Adrenal gland (tissue), 19 donors: ENCODE measurements at regions of chr4 and their contacts with region 1.

Region 1: DNA sequence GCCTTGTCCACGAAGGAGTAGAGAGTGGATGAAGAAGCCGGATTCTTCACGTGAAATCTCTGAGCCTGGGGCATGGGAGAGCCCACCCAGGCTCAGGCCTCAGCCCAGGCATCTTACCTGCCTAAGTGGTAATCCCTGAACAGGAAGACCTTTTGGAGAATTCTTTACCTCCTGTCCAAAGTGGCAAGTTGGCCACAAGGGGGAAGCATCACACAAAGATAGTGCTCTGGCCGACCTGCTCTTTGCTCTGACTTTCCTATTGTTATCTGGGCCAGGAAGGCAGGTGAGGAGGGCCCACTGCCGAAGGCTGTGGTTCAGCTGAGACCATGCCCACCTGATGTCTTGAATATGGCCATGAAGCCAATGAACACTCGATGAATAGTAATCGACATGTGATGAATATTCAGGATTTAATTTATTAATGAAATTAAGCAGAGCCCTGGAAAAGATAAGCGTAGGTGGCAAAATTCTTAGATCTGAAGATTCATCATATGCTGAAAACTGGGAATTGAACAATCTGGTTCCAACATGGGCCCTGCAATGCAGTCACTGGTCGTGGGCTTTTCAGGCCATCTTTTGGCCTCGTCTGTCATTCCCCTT is 93.8 kb downstream of the PDGFRA start:
- DNase-seq: peak; percentile 67 to 86 (median 70)
- H3K4me3 ChIP-seq: no peak overlapping the region
- H3K27ac ChIP-seq: no peak overlapping the region
- H3K4me1 ChIP-seq: no peaks in the 10 kb centered on the region
- H3K27me3 ChIP-seq: no peaks in the 10 kb centered on the region
- CTCF ChIP-seq: peak; percentile 56 to 73 (median 70)
- POLR2A ChIP-seq: no peak

Region 2: DNA sequence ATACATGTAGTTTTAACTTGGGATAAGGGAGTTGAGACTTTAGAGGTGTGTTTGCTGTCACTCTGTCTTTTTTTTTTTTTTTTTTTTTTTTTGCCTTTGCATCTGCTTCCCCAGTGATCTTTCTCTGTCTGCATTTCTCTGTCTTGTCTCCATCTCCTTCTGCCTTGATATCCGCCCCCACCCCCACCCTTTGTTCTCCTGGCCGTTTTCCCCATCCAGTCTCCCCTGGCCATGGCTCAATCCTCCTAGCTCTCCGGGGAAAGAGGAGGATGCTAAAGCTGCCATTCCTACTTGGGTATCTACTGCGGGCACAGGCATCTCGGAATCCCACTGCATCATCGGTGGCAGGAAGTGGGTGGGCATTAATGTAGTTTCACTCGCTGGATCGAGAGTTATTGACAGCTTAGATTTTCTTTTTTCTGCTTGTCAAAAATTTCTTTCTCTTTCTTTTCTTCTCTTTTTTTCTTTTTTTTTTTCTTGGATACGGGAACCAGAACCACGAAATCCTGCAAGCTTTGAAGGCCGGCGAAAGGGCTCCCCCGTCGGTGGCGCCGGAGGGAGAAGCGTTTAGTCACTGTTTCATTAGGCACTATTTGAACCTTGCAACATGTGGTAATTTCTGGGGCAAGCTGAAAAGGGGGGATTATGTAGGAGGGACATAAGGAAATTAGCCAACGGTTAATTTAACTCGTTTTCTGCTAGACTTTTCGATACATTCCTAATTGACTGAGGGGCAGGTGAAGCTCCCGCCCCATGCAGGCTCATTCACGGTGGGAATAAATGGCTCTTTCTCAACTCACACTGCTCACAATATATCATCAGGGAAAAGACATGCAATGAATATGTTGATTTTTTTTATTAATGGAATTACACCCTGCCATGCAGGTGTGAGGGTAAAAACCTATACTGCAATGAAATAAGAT is 214.7 kb before region 1 on chr4:
- intact Hi-C with region 1: no loop called
- DNase-seq: no peak
- H3K4me3 ChIP-seq: no peak overlapping the region
- H3K27ac ChIP-seq: no peak overlapping the region
- H3K4me1 ChIP-seq: peaks cover 0 to 14% of the 10 kb centered on the region in 2 donors
- H3K27me3 ChIP-seq: peaks cover 41% of the 10 kb centered on the region
- CTCF ChIP-seq: no peak
- POLR2A ChIP-seq: no peak

Region 3: GRCh38 chr4:54368281-54369265 is 45.7 kb after region 1 on chr4:
- intact Hi-C with region 1: no loop called
- DNase-seq: no peak
- H3K4me3 ChIP-seq: no peak overlapping the region
- H3K27ac ChIP-seq: no peak overlapping the region
- H3K4me1 ChIP-seq: no peaks in the 10 kb centered on the region
- H3K27me3 ChIP-seq: no peaks in the 10 kb centered on the region
- CTCF ChIP-seq: no peak
- POLR2A ChIP-seq: no peak

Region 4: GRCh38 chr4:54440394-54441136 is 117.6 kb after region 1 on chr4:
- intact Hi-C with region 1: loop called (anchors 5 to 10 kb)
- DNase-seq: peak in 4 of 7 donors; percentile 10 to 28 (median 25)
- H3K4me3 ChIP-seq: peak overlapping the region in 1 of 4 donors; percentile 21
- H3K27ac ChIP-seq: no peak overlapping the region
- H3K4me1 ChIP-seq: no peaks in the 10 kb centered on the region
- H3K27me3 ChIP-seq: no peaks in the 10 kb centered on the region
- CTCF ChIP-seq: peak; percentile 33 to 64 (median 60)
- POLR2A ChIP-seq: no peak

Region 5: DNA sequence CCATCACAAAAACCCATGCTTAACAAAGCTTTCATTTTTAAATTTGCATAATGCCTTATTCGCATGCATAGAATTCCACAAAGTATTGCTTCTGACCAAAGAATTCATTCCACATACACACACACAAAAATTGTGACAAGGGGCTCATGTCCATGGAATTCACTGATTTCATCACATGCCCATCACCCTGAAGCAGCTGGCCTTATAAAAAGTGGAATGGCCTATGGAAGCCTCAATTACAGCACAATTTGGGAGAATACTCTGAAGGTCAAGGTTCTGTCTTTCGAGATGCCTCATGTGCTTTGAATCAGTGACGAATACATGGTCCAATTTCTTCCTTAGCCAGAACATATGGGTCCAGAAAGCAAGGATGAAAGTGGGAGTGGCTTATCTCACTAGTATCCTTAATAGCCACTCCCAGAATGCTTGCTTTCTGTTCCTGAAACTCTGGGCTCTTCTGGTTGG is 636.8 kb after region 1 on chr4:
- intact Hi-C with region 1: loop called in 1 of 2 experiments (anchors 5 kb)
- DNase-seq: no peak
- H3K4me3 ChIP-seq: no peak overlapping the region
- H3K27ac ChIP-seq: no peak overlapping the region
- H3K4me1 ChIP-seq: no peaks in the 10 kb centered on the region
- H3K27me3 ChIP-seq: no peaks in the 10 kb centered on the region
- CTCF ChIP-seq: no peak
- POLR2A ChIP-seq: no peak

Region 6: DNA sequence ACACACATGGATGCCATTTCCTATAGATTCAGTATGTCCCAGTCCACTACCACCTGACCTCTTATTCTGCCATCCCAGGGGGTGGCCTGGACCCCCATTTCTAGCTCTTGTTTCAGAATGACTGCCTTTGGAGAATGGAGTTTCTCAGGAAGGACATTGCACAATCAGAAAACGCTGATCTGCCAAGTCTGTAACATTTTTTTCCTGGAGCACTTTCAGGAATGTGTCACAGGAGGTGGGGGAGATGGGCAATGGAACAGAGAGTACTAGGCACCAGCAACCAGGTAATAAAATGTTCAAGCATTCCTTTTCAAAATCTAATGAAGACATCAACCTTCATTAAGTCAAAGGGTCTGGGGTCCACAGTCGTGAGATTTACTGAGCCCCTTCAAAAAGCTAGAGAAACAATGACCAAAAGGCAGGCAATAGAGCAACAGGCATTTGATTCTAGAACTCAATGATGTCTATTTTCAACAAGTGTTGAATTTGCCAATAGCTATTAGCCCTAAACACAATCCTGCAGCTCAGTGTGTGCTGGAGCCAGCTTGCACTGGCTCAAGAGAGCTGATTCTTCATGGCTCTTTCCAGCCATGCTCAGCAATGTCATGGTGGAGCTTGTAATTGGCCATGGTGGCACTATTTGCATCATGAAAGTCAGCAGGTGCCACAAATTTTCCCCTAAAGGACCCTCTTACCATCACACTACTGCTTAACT is 715.4 kb after region 1 on chr4:
- intact Hi-C with region 1: no loop called
- DNase-seq: peak in 5 of 7 donors; percentile 25 to 63 (median 32)
- H3K4me3 ChIP-seq: no peak overlapping the region
- H3K27ac ChIP-seq: peak overlapping the region in 1 of 5 donors; percentile 16
- H3K4me1 ChIP-seq: peaks cover 8 to 10% of the 10 kb centered on the region in 2 donors
- H3K27me3 ChIP-seq: no peaks in the 10 kb centered on the region
- CTCF ChIP-seq: no peak
- POLR2A ChIP-seq: no peak

Region 7: DNA sequence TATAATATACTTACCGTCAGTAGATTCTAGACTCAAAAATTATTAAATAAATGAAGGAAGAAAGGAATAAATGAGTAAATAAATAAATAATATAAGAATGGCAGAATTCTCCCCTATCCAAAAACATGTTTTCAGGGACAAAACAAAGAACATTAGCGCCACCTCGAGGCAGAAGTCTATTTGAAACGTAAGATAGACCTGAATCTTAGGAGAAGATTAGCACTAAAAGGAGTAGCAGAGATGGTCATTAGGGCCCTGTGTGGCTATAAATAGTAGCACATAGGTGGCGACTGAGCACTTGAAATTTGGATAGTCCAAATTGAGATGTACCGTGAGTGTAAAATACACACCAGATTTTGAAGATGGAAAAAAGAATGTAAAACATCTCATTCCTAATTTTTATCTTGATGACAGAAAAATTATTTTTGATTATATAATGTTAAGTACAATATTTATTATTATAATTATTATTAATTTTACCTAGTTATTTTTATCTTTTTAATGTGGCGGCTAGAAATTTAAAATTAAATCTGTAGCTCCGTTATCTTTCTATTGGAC is 998.9 kb after region 1 on chr4:
- intact Hi-C with region 1: loop called in 1 of 2 experiments (anchors 10 kb)
- DNase-seq: peak; percentile 69 to 90 (median 80)
- H3K4me3 ChIP-seq: no peak overlapping the region
- H3K27ac ChIP-seq: no peak overlapping the region
- H3K4me1 ChIP-seq: no peaks in the 10 kb centered on the region
- H3K27me3 ChIP-seq: no peaks in the 10 kb centered on the region
- CTCF ChIP-seq: peak; percentile 42 to 73 (median 62)
- POLR2A ChIP-seq: no peak